ENCODE measurements at regions of chr5 and their contacts with region 1.

Region 1: DNA sequence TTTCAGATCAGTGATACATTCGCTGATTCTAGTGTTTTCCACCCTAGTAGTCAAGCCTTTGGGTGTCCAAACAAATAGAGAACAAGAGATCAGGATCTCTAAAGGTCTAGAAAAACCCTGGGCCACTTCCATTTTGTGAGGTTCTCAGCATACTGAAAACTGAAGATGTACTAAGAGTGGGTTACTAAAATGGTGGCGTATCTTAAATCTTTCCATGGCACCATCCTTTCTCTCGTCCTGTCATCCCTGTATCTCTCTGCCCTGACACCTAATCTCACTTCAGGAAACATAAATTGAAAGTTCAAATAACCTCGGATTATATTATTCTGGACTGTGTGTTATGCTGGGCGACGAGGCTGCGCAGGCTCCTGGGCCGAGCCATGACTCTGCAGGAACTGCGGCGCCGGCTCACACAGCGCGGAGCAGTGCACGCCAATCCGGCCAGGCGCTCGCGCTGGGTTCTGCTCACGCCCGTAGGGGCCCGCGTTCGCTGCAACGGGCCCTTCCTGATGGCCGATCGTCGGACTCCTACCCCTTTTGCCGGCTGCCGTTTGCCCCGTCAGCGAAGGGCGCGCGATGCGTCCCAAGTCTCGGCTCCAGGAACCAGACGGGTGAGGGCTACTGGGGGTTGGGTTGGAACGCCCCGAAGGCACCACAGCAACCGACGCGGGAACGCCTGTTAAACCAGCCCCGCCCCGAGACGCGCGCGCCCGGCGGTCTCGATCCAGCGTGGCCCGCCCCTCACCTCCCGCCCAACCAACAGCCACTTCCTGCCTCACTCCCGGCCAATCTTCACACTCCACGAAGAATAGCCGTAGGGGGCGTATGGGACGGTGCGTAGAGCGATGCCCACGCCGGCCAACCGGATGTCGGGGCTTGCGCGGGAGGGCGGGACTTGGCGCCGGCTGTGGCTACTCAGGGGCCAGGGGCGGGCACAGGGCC is 503 bp upstream of the CANX start:
- DNase-seq: peak; percentile 100
- H3K4me3 Mint-ChIP-seq: peak overlapping the region; percentile 94
- H3K27ac Mint-ChIP-seq: peak overlapping the region; percentile 99
- H3K4me1 Mint-ChIP-seq: peaks cover 29% of the 10 kb centered on the region
- H3K27me3 Mint-ChIP-seq: no peaks in the 10 kb centered on the region
- CTCF ChIP-seq: no peak

Region 2: DNA sequence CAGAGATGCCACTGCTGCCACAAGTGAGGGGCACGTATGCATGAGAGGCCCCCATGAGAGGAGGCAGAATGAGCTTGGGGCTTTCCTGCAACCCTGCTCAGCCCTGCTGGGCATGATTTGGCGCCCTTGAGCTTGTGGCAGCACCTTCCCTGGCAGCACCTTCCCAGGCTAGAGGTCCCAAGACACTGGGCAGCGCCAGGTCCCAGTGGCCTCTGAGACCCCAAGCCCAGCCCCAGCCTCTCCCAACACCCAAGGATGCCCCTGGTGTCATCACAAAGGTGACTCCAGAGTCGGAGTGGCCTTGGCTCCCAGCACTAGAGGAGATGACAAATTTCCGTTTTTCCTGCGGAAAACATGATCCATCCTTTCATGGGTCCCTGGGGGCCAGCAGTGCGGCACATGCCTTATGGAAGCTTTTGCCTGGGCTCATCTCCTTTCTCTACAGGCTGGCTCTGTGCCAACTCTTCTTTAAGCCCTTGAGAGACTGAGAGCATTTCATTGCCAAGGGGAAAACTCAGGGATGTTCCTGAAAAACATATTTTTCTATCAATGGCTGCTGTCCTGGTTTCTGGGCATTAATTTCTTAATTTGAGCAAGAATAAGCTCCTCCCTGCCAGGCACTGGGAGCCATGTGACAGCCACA is 275.9 kb before region 1 on chr5:
- CTCF ChIA-PET with region 1: no interaction called
- POLR2A ChIA-PET with region 1: no interaction called
- intact Hi-C with region 1: no loop called
- DNase-seq: no peak
- H3K4me3 Mint-ChIP-seq: no peak overlapping the region
- H3K27ac Mint-ChIP-seq: peak overlapping the region; percentile 40
- H3K4me1 Mint-ChIP-seq: peaks cover 23% of the 10 kb centered on the region
- H3K27me3 Mint-ChIP-seq: peaks cover 17% of the 10 kb centered on the region
- CTCF ChIP-seq: no peak

Region 3: GRCh38 chr5:179716286-179716685 is 18.0 kb after region 1 on chr5:
- CTCF ChIA-PET with region 1: interaction called, 10 read pairs
- POLR2A ChIA-PET with region 1: interaction called, 13 read pairs
- intact Hi-C with region 1: no loop called
- DNase-seq: no peak
- H3K4me3 Mint-ChIP-seq: no peak overlapping the region
- H3K27ac Mint-ChIP-seq: no peak overlapping the region
- H3K4me1 Mint-ChIP-seq: peaks cover 5% of the 10 kb centered on the region
- H3K27me3 Mint-ChIP-seq: no peaks in the 10 kb centered on the region
- CTCF ChIP-seq: no peak

Measured in MCF 10A (cell line).